ENCODE measurements at regions of chr3 and their contacts with region 1.

Region 1: DNA sequence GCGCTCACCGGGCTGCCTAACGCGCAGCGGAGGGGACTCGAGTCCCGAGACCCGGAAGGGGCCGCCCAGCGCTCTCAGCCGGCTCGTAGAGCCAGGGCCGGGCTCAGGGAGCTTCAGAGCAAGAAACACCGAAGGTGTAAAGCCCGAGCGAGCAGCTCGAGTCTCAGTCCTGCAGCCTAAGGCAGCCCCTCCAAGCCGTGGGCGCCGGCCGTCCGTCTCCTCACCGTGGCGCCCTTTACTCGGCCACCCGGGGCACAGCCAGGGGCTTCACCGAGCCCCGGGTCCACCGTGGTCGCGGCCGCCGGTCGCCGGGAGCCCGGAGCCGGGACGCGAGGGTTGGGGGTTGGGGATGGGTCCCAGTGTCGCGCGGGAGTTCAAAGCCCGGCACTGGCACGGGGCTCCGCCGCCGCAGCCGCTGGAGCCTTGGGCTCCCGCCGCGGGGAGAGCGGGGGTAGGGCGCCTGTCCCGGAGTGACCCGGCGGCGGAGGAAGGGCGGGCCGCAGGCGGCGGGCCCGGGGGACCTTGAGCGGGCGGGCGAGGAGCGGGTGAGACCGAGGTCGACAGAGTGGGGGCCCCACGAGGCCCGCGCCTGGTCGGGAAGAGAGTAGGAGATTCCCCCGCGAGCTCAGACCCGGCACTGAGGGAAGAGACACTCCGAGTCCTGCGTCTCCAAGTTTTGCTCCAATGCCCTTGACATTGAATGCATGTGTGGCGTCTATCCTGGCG is 26.9 kb upstream of the THRB start:
- DNase-seq: peak; percentile 45
- ATAC-seq: peak; percentile 85
- H3K4me3 Mint-ChIP-seq: peak overlapping the region; percentile 76
- H3K27ac Mint-ChIP-seq: no peak overlapping the region
- H3K4me1 Mint-ChIP-seq: peaks cover 25% of the 10 kb centered on the region
- H3K27me3 Mint-ChIP-seq: peaks cover 33% of the 10 kb centered on the region
- CTCF ChIP-seq: no peak

Region 2: DNA sequence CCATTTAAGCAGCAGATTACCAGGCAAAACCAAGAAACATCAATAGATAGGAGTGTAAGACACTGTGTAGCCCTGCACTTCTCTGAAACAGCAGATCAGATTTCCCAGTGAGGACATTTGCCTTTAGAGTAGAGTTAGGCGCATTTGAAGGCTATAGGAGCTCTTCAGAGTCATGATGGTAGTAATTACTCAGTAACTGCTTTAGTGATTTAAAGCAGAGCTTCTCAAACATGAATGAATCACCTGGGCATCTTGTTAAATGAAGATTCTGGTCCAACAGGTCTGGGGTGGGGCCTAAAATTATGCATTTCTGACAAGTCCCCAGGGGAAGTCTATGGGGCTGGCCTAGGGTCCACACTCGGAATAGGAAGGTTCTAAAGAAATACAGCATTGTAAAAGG is 63.8 kb before region 1 on chr3:
- CTCF ChIA-PET with region 1: no interaction called
- POLR2A ChIA-PET with region 1: no interaction called
- intact Hi-C with region 1: no loop called
- DNase-seq: no peak
- ATAC-seq: no peak
- H3K4me3 Mint-ChIP-seq: no peak overlapping the region
- H3K27ac Mint-ChIP-seq: no peak overlapping the region
- H3K4me1 Mint-ChIP-seq: no peaks in the 10 kb centered on the region
- H3K27me3 Mint-ChIP-seq: peaks cover 2% of the 10 kb centered on the region
- CTCF ChIP-seq: no peak

Region 3: DNA sequence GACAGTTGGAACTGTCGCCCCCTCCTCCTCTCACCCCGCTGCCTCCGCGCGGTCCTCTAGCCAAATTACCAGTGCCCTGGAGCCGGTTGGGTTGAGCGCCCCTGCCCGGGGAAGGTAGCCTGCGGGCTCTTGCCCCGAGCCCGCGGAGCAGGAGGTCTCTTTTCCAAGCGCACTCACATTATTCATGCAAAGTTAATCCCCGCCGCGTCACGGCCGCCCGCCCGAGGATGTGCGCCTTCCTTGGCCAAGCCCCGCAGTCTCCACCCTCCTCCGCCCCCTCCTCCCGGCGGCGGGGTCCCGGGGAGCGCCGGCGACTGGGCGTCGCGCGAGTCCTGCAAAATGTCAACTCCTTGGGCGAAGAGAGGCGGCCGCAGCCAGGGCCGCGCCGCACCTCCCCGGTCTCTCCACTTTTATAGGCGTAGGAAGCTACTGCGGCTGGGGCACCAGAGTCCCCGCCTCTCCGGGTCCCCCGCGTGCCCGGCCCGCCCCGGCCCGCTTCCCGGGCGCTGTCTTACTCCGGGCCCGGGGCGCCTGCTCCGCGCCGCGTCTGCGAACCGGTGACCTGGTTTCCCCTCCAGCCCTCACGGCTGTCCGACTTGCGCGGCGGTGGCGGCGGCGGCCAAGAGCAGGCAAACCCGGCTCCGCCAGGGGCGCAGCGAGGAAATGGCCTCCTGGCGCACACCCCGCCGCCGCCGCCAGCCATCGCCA is 26.8 kb before region 1 on chr3 and contains the start of gene THRB:
- CTCF ChIA-PET with region 1: no interaction called
- POLR2A ChIA-PET with region 1: interaction called, 4 read pairs
- intact Hi-C with region 1: loop called (anchors 1 kb)
- DNase-seq: peak; percentile 57
- ATAC-seq: peak; percentile 72
- H3K4me3 Mint-ChIP-seq: peak within 1 kb of the TSS; percentile 90
- H3K27ac Mint-ChIP-seq: peak within 1 kb of the TSS; percentile 78
- H3K4me1 Mint-ChIP-seq: peaks cover 15% of the 10 kb centered on the region
- H3K27me3 Mint-ChIP-seq: peaks cover 35% of the 10 kb centered on the region
- CTCF ChIP-seq: no peak
- total RNA-seq, gene THRB: 0.31 and 0.86 TPM in 2 replicates

Region 4: GRCh38 chr3:24503616-24504113 is 17.9 kb before region 1 on chr3:
- CTCF ChIA-PET with region 1: no interaction called
- POLR2A ChIA-PET with region 1: no interaction called
- intact Hi-C with region 1: loop called (anchors 1 kb)
- DNase-seq: no peak
- ATAC-seq: peak; percentile 54
- H3K4me3 Mint-ChIP-seq: no peak overlapping the region
- H3K27ac Mint-ChIP-seq: peak overlapping the region; percentile 46
- H3K4me1 Mint-ChIP-seq: peaks cover 60% of the 10 kb centered on the region
- H3K27me3 Mint-ChIP-seq: peaks cover 2% of the 10 kb centered on the region
- CTCF ChIP-seq: no peak

Region 5: GRCh38 chr3:24972491-24972890 is 450.9 kb after region 1 on chr3:
- CTCF ChIA-PET with region 1: no interaction called
- POLR2A ChIA-PET with region 1: no interaction called
- intact Hi-C with region 1: no loop called
- DNase-seq: no peak
- ATAC-seq: no peak
- H3K4me3 Mint-ChIP-seq: no peak overlapping the region
- H3K27ac Mint-ChIP-seq: no peak overlapping the region
- H3K4me1 Mint-ChIP-seq: no peaks in the 10 kb centered on the region
- H3K27me3 Mint-ChIP-seq: no peaks in the 10 kb centered on the region
- CTCF ChIP-seq: no peak